Activated T-helper 2 cell treated with anti-CD3 and anti-CD28 coated beads, Interferon-gamma antibody, Interleukin-2, Interleukin-4, amounts not matched to agents 10 μg/mL and 5 μg/mL and 100 μg/mL, durations not matched to agents 14 hours and 24 hours and 36 hours (primary cell): ENCODE measurements at regions of chr10 and their contacts with region 1.

Region 1: GRCh38 chr10:102151774-102152544 is at the start of gene NOLC1:
- DNase-seq: peak; percentile 100
- H3K4me3 Mint-ChIP-seq: peak within 1 kb of the TSS; percentile 97
- H3K27ac Mint-ChIP-seq: peak within 1 kb of the TSS; percentile 96
- H3K4me1 Mint-ChIP-seq: peaks cover 28% of the 10 kb centered on the region
- H3K27me3 Mint-ChIP-seq: no peaks in the 10 kb centered on the region
- total RNA-seq, gene NOLC1: 195 and 196 TPM in 2 replicates

Region 2: GRCh38 chr10:102064868-102065560 is 86.9 kb before region 1 on chr10 and contains the start of gene HPS6:
- intact Hi-C with region 1: loop called (anchors 2 kb)
- DNase-seq: peak; percentile 88
- H3K4me3 Mint-ChIP-seq: peak within 1 kb of the TSS; percentile 86
- H3K27ac Mint-ChIP-seq: peak within 1 kb of the TSS; percentile 89
- H3K4me1 Mint-ChIP-seq: peaks cover 21% of the 10 kb centered on the region
- H3K27me3 Mint-ChIP-seq: no peaks in the 10 kb centered on the region
- total RNA-seq, gene HPS6: 25.4 and 25.5 TPM in 2 replicates

Region 3: DNA sequence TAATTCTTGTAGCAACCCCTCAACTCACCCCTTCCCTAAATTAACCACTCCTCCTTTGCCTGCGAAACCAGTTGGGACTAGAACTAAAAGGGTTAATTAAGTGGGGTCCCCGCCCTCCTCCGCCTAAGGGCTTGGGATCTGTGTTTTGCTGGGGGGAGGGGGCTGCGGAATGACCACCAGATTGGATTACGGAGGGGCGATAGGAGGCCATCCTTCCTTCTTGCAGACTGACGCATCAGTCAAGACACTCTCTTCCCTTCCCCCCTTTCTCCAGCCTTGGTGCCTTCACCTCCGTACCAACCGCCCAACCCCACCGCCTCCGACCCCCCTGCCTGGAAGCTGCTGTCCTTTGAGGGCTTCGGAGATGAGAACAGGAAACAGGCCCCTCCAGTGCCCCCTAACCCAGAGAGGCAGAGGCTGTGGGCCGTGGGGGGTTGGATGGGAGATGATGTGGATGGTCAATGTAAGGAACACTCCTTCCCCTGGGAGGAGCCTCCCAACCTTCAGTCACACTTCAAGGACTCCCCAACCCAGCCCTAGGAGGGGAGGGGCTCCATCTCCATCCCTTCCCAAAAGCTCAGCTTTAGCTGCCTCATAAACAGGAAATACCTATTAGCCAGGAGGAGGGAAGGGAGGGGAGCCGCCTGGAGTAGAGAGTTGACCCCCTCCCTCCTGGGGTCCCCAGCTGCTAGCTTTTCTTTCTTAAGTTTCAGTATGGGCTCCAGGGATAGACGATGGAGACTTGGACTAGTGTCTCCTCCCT is 30.8 kb before region 1 on chr10:
- intact Hi-C with region 1: loop called (anchors 1 kb)
- DNase-seq: no peak
- H3K4me3 Mint-ChIP-seq: peak overlapping the region; percentile 85
- H3K27ac Mint-ChIP-seq: peak overlapping the region; percentile 90
- H3K4me1 Mint-ChIP-seq: peaks cover 39% of the 10 kb centered on the region
- H3K27me3 Mint-ChIP-seq: no peaks in the 10 kb centered on the region

Region 4: GRCh38 chr10:102245101-102245931 is 93.4 kb after region 1 on chr10 and contains the start of gene GBF1:
- intact Hi-C with region 1: loop called (anchors 2 kb)
- DNase-seq: peak; percentile 92
- H3K4me3 Mint-ChIP-seq: peak within 1 kb of the TSS; percentile 99
- H3K27ac Mint-ChIP-seq: peak within 1 kb of the TSS; percentile 92
- H3K4me1 Mint-ChIP-seq: peaks cover 39% of the 10 kb centered on the region
- H3K27me3 Mint-ChIP-seq: peaks cover 14% of the 10 kb centered on the region
- total RNA-seq, gene GBF1: 47.9 and 49.2 TPM in 2 replicates